Endothelial cell of umbilical vein (primary cell): ENCODE measurements at regions of chr17 and their contacts with region 1.

Region 1: DNA sequence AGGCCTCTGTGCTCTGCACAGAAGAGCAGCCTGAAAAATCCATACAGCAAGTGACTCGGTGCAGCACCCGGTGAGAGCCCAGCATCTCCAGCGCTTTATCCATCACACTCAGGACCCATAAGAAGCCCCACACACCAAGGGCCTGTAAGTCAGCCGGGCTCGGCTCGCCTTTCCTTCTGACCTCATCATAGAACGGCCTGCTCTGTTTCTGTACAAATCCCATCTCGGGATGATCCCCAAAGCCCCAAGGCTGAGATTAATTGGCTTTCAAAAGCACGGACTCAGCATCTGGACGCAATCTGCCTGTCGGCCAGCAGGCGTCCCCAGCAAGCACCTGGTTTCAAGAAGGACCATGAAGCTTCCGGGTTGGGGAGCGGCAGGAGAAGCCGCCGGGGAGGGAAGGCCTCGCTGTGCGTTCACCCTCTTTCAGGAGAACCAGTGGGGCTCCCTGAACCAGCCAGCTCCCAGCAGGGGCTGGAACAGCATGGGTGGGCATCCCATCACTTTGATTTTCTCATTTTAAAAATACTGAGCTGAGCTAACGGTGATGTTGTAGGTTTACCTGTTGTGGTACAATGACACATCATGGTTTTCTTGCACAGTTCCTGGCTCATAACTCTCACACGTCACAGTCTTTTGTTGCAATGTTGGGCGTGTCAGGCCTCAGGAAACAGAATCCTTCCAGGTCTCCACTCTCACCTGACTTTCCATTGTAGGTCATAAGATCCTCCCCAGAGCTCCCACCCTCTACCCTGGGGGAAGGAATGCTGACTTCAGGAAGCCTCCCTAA is 6.7 kb downstream of the CCDC57 start:
- DNase-seq: peak; percentile 77
- H3K4me3 ChIP-seq: no peak overlapping the region
- H3K27ac ChIP-seq: peak overlapping the region; percentile 35
- H3K4me1 ChIP-seq: peaks cover 7% of the 10 kb centered on the region
- H3K27me3 ChIP-seq: no peaks in the 10 kb centered on the region
- CTCF ChIP-seq: peak; percentile 86 to 89
- POLR2A ChIP-seq: peak; percentile 80

Region 2: GRCh38 chr17:81666342-81667191 is 539.3 kb before region 1 on chr17 and contains the starts of genes CCDC137 and OXLD1:
- CTCF ChIA-PET with region 1: no interaction called
- POLR2A ChIA-PET with region 1: no interaction called
- dilution Hi-C with region 1: no loop called
- intact Hi-C with region 1: no loop called
- DNase-seq: peak; percentile 95
- H3K4me3 ChIP-seq: peak within 1 kb of the TSS; percentile 34 to 76 (median 64)
- H3K27ac ChIP-seq: peak within 1 kb of the TSS; percentile 36
- H3K4me1 ChIP-seq: peaks cover 18% of the 10 kb centered on the region
- H3K27me3 ChIP-seq: no peaks in the 10 kb centered on the region
- CTCF ChIP-seq: no peak
- POLR2A ChIP-seq: peak; percentile 90
- total RNA-seq, gene CCDC137: 32.2 and 32.7 TPM in 2 replicates
- total RNA-seq, gene OXLD1: 18.5 and 20.1 TPM in 2 replicates

Region 3: GRCh38 chr17:82188001-82188961 is 17.6 kb before region 1 on chr17:
- CTCF ChIA-PET with region 1: interaction called, 13 read pairs
- POLR2A ChIA-PET with region 1: interaction called, 4 read pairs
- dilution Hi-C with region 1: no loop called
- intact Hi-C with region 1: no loop called
- DNase-seq: no peak
- H3K4me3 ChIP-seq: no peak overlapping the region
- H3K27ac ChIP-seq: no peak overlapping the region
- H3K4me1 ChIP-seq: no peaks in the 10 kb centered on the region
- H3K27me3 ChIP-seq: no peaks in the 10 kb centered on the region
- CTCF ChIP-seq: no peak
- POLR2A ChIP-seq: no peak

Region 4: DNA sequence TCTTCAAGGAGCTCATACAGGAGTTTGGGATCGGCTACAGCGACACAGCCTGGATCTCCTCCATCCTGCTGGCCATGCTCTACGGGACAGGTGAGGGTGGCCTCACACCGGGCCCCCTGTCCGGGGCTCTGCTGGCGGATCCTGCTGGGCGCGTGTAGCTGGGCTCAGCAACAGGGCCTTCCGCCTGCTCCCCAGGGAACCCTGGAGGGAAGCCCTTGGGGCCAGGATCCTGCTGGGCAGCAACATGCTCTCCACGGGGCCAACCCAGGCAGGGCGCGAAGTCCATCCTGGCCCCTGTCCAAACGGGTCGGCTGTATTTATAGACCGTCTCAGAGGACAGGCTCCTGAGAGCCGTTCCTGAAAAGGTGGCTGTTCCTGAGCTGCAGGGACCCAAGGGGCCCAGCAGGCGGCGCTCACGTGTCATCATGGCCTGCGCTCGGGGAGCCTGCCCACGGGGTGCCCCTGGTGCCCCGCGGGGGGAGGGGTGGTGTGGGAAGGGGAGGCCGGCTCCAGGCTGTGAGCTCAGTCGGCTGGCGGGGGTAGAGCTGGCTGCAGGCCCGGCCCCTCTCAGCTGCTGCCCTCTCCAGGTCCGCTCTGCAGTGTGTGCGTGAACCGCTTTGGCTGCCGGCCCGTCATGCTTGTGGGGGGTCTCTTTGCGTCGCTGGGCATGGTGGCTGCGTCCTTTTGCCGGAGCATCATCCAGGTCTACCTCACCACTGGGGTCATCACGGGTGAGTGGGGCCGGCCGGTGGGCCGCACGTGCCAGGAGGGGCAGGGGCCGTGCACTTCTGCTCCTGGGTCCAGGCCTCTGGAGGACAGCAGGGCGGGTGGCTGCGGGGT is 30.4 kb after region 1 on chr17:
- CTCF ChIA-PET with region 1: interaction called, 104 read pairs
- POLR2A ChIA-PET with region 1: no interaction called
- dilution Hi-C with region 1: no loop called
- intact Hi-C with region 1: loop called (anchors 5 kb)
- DNase-seq: peak; percentile 45
- H3K4me3 ChIP-seq: no peak overlapping the region
- H3K27ac ChIP-seq: no peak overlapping the region
- H3K4me1 ChIP-seq: peaks cover 21% of the 10 kb centered on the region
- H3K27me3 ChIP-seq: no peaks in the 10 kb centered on the region
- CTCF ChIP-seq: peak; percentile 80 to 91
- POLR2A ChIP-seq: no peak

Region 5: GRCh38 chr17:82332669-82333278 is 126.9 kb after region 1 on chr17:
- CTCF ChIA-PET with region 1: no interaction called
- POLR2A ChIA-PET with region 1: no interaction called
- dilution Hi-C with region 1: no loop called
- intact Hi-C with region 1: no loop called
- DNase-seq: peak; percentile 8
- H3K4me3 ChIP-seq: peak overlapping the region in 1 of 3 experiments; percentile 37
- H3K27ac ChIP-seq: no peak overlapping the region
- H3K4me1 ChIP-seq: peaks cover 9% of the 10 kb centered on the region
- H3K27me3 ChIP-seq: peaks cover 0 to 2% of the 10 kb centered on the region in 2 experiments
- CTCF ChIP-seq: no peak
- POLR2A ChIP-seq: no peak